ENCODE measurements at regions of chr3 and their contacts with region 1.

Region 1: GRCh38 chr3:105868742-105869530 is at the start of gene CBLB:
- DNase-seq: peak; percentile 69 to 94 (median 82)
- ATAC-seq: peak; percentile 86
- H3K4me3 ChIP-seq: peak within 1 kb of the TSS; percentile 93 to 98
- H3K4me3 Mint-ChIP-seq: peak within 1 kb of the TSS; percentile 93
- H3K27ac ChIP-seq: peak within 1 kb of the TSS; percentile 77 to 85
- H3K27ac Mint-ChIP-seq: peak within 1 kb of the TSS; percentile 93
- H3K4me1 ChIP-seq: peaks cover 36% of the 10 kb centered on the region
- H3K4me1 Mint-ChIP-seq: peaks cover 49% of the 10 kb centered on the region
- H3K27me3 ChIP-seq: no peaks in the 10 kb centered on the region
- H3K27me3 Mint-ChIP-seq: no peaks in the 10 kb centered on the region
- CTCF ChIP-seq: no peak
- total RNA-seq, gene CBLB: 133 to 140 TPM

Region 2: GRCh38 chr3:105686278-105686897 is 182.5 kb before region 1 on chr3:
- CTCF ChIA-PET with region 1: no interaction called
- POLR2A ChIA-PET with region 1: interaction called, 7 read pairs
- intact Hi-C with region 1: loop called (anchors 2 to 5 kb)
- DNase-seq: peak in 2 of 9 experiments; percentile 43 to 63
- ATAC-seq: peak; percentile 66
- H3K4me3 ChIP-seq: no peak overlapping the region
- H3K4me3 Mint-ChIP-seq: no peak overlapping the region
- H3K27ac ChIP-seq: peak overlapping the region in 1 of 2 experiments; percentile 42
- H3K27ac Mint-ChIP-seq: peak overlapping the region; percentile 60
- H3K4me1 ChIP-seq: peaks cover 21% of the 10 kb centered on the region
- H3K4me1 Mint-ChIP-seq: peaks cover 28% of the 10 kb centered on the region
- H3K27me3 ChIP-seq: no peaks in the 10 kb centered on the region
- H3K27me3 Mint-ChIP-seq: no peaks in the 10 kb centered on the region
- CTCF ChIP-seq: peak; percentile 98

Region 3: GRCh38 chr3:105798381-105798934 is 70.5 kb before region 1 on chr3:
- CTCF ChIA-PET with region 1: no interaction called
- POLR2A ChIA-PET with region 1: no interaction called
- intact Hi-C with region 1: loop called (anchors 2 to 5 kb)
- DNase-seq: peak in 1 of 9 experiments; percentile 38
- ATAC-seq: peak; percentile 47
- H3K4me3 ChIP-seq: no peak overlapping the region
- H3K4me3 Mint-ChIP-seq: peak overlapping the region; percentile 23
- H3K27ac ChIP-seq: no peak overlapping the region
- H3K27ac Mint-ChIP-seq: peak overlapping the region; percentile 37
- H3K4me1 ChIP-seq: peaks cover 40% of the 10 kb centered on the region
- H3K4me1 Mint-ChIP-seq: peaks cover 85% of the 10 kb centered on the region
- H3K27me3 ChIP-seq: no peaks in the 10 kb centered on the region
- H3K27me3 Mint-ChIP-seq: no peaks in the 10 kb centered on the region
- CTCF ChIP-seq: no peak

Region 4: GRCh38 chr3:105829871-105830622 is 38.9 kb before region 1 on chr3:
- CTCF ChIA-PET with region 1: interaction called, 3 read pairs
- POLR2A ChIA-PET with region 1: interaction called, 6 read pairs
- intact Hi-C with region 1: loop called (anchors 2 to 5 kb)
- DNase-seq: peak in 2 of 9 experiments; percentile 50 to 71
- ATAC-seq: peak; percentile 77
- H3K4me3 ChIP-seq: no peak overlapping the region
- H3K4me3 Mint-ChIP-seq: peak overlapping the region; percentile 6
- H3K27ac ChIP-seq: peak overlapping the region; percentile 35 to 60
- H3K27ac Mint-ChIP-seq: peak overlapping the region; percentile 78
- H3K4me1 ChIP-seq: peaks cover 60% of the 10 kb centered on the region
- H3K4me1 Mint-ChIP-seq: peaks cover 80% of the 10 kb centered on the region
- H3K27me3 ChIP-seq: no peaks in the 10 kb centered on the region
- H3K27me3 Mint-ChIP-seq: no peaks in the 10 kb centered on the region
- CTCF ChIP-seq: no peak

Region 5: DNA sequence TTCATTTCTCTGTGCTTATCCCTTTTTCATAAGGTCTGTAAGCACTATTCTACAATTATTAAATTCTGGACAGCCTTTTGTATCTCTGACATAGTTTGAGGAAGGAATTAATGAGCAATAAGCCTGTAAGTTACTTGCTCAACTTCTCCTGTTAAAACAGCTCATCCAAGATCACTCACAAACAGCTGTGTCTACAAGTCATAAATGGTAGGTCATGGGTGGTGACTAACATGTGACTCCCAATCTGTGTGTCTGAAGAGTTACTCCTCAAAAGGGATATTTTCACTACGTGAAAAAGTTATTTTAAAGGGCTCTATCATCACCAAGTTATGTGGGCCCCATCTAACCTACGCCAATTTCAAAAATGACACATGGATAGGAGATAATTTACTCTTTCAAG is 145.0 kb after region 1 on chr3:
- CTCF ChIA-PET with region 1: no interaction called
- POLR2A ChIA-PET with region 1: no interaction called
- intact Hi-C with region 1: no loop called
- DNase-seq: no peak
- ATAC-seq: no peak
- H3K4me3 ChIP-seq: no peak overlapping the region
- H3K4me3 Mint-ChIP-seq: no peak overlapping the region
- H3K27ac ChIP-seq: no peak overlapping the region
- H3K27ac Mint-ChIP-seq: no peak overlapping the region
- H3K4me1 ChIP-seq: no peaks in the 10 kb centered on the region
- H3K4me1 Mint-ChIP-seq: peaks cover 16% of the 10 kb centered on the region
- H3K27me3 ChIP-seq: no peaks in the 10 kb centered on the region
- H3K27me3 Mint-ChIP-seq: no peaks in the 10 kb centered on the region
- CTCF ChIP-seq: no peak

Region 6: DNA sequence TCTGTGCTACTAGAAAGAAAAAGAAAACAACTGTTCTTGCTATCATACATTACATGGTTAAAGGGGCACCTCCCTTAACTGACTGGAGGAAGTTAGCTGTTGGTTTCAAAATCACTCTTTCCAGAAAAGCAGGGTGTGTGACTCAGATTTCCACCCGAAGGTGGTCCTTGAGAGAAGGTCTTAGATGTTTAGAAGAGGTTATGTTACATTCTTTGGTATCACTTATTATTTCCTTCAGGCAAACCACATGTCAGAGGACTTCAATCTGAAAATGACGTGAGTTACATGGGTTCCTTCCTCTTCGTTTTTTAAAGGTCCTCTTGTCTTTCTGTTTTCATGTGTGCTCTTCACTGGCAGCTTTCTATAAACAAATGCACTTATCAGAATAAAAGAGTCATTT is 307.8 kb after region 1 on chr3:
- CTCF ChIA-PET with region 1: no interaction called
- POLR2A ChIA-PET with region 1: no interaction called
- intact Hi-C with region 1: loop called (anchors 1 to 10 kb)
- DNase-seq: peak; percentile 8 to 86 (median 52)
- ATAC-seq: peak; percentile 95
- H3K4me3 ChIP-seq: peak overlapping the region; percentile 24 to 25
- H3K4me3 Mint-ChIP-seq: peak overlapping the region; percentile 47
- H3K27ac ChIP-seq: peak overlapping the region; percentile 25 to 66
- H3K27ac Mint-ChIP-seq: peak overlapping the region; percentile 75
- H3K4me1 ChIP-seq: peaks cover 50% of the 10 kb centered on the region
- H3K4me1 Mint-ChIP-seq: peaks cover 57% of the 10 kb centered on the region
- H3K27me3 ChIP-seq: no peaks in the 10 kb centered on the region
- H3K27me3 Mint-ChIP-seq: no peaks in the 10 kb centered on the region
- CTCF ChIP-seq: no peak

Region 7: GRCh38 chr3:106333911-106334618 is 465.1 kb after region 1 on chr3:
- CTCF ChIA-PET with region 1: no interaction called
- POLR2A ChIA-PET with region 1: interaction called, 4 read pairs
- intact Hi-C with region 1: loop called in 1 of 2 experiments (anchors 10 kb)
- DNase-seq: peak in 5 of 9 experiments; percentile 13 to 64 (median 42)
- ATAC-seq: peak; percentile 63
- H3K4me3 ChIP-seq: no peak overlapping the region
- H3K4me3 Mint-ChIP-seq: peak overlapping the region; percentile 50
- H3K27ac ChIP-seq: peak overlapping the region in 1 of 2 experiments; percentile 50
- H3K27ac Mint-ChIP-seq: peak overlapping the region; percentile 66
- H3K4me1 ChIP-seq: peaks cover 28% of the 10 kb centered on the region
- H3K4me1 Mint-ChIP-seq: peaks cover 47% of the 10 kb centered on the region
- H3K27me3 ChIP-seq: no peaks in the 10 kb centered on the region
- H3K27me3 Mint-ChIP-seq: no peaks in the 10 kb centered on the region
- CTCF ChIP-seq: no peak

Measured in CD8-positive, alpha-beta T cell (primary cell).